Activated T-helper 2 cell treated with anti-CD3 and anti-CD28 coated beads, Interferon-gamma antibody, Interleukin-2, Interleukin-4, amounts not matched to agents 10 μg/mL and 5 μg/mL and 100 μg/mL, durations not matched to agents 14 hours and 24 hours and 36 hours (primary cell): ENCODE measurements at regions of chr2 and their contacts with region 1.

Region 1: DNA sequence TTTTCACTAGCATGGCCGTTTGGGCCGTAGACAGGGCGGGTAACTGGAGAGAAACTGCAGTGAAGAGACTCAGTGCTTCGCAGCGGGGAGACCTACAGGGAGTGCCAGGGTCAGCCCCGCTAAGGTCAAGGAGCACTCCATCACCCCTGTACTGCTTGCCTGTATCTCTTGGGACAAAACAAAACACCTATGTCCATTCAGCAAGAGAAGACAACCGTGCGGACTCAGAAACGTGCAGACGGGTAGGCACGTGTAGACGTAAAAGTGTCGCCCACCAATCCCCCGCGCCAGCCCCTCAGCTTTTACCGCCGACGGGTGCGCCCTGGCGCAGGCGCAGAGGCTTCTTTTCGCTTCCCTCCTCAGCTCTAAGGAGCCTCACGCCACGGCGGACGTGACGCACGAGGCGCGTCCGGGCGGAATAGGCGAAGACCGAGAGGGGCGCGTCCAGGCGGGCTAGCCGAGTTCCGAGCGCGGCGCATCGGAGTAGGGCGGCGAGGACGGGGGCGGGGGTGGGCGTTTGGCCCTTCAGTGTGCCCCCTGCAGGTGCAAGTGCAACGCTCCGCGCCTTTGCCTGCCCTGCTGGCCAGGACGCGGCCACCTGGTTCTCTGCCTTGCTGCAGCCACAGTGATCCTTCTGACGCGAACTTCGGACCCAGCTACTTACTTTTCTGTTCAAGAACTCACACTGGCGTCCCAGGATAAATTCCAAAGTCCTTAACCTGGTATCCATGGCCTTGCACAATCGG is 3.3 kb upstream of the SOS1 start:
- DNase-seq: peak; percentile 95
- H3K4me3 Mint-ChIP-seq: peak overlapping the region; percentile 97
- H3K27ac Mint-ChIP-seq: peak overlapping the region; percentile 96
- H3K4me1 Mint-ChIP-seq: peaks cover 49% of the 10 kb centered on the region
- H3K27me3 Mint-ChIP-seq: no peaks in the 10 kb centered on the region

Region 2: DNA sequence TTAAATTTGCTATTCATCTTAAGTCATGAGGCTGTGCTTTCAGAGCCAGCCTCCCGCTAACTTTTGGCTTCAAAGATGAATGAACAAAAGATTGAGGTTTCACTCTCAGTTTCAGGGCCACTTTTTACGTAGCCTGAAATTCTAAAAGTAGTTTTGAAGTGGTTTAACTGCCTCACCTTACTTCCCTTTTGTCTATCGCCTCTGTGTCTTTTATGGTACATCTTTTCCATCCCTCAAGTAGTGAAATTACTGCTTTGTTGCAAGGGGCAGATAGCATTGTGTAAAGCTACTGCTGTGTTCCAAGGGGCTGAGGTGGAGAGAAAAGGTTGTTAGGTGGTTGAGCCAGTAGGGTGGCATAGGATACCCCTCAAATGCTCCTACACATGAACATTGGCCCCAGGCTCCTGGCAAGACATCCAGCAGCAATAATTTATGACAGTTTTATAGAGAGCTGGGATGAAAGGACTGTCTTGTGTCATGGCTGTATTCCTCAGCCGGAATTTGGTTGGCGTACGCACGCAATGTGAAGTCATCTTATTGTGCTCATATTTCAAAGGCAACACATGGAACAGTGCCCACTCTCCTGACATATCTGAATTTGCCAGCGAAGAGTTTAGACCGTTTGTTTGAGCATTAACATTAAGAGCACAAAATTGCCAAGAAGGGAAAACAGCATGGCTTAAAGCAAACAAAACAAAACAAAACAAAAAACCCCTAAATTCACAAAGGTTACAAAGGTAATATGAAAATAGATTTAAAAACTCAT is 1747.6 kb before region 1 on chr2:
- intact Hi-C with region 1: loop called (anchors 10 kb)
- DNase-seq: peak; percentile 20
- H3K4me3 Mint-ChIP-seq: peak overlapping the region; percentile 24
- H3K27ac Mint-ChIP-seq: peak overlapping the region; percentile 73
- H3K4me1 Mint-ChIP-seq: peaks cover 29% of the 10 kb centered on the region
- H3K27me3 Mint-ChIP-seq: peaks cover 44% of the 10 kb centered on the region

Region 3: GRCh38 chr2:39059366-39059952 is 64.7 kb before region 1 on chr2:
- intact Hi-C with region 1: loop called (anchors 2 kb)
- DNase-seq: no peak
- H3K4me3 Mint-ChIP-seq: no peak overlapping the region
- H3K27ac Mint-ChIP-seq: peak overlapping the region; percentile 58
- H3K4me1 Mint-ChIP-seq: peaks cover 20% of the 10 kb centered on the region
- H3K27me3 Mint-ChIP-seq: no peaks in the 10 kb centered on the region

Region 4: GRCh38 chr2:39141331-39142271 is 17.4 kb after region 1 on chr2:
- intact Hi-C with region 1: loop called (anchors 1 kb)
- DNase-seq: no peak
- H3K4me3 Mint-ChIP-seq: peak overlapping the region; percentile 11
- H3K27ac Mint-ChIP-seq: peak overlapping the region; percentile 36
- H3K4me1 Mint-ChIP-seq: peaks cover 58% of the 10 kb centered on the region
- H3K27me3 Mint-ChIP-seq: no peaks in the 10 kb centered on the region

Region 5: DNA sequence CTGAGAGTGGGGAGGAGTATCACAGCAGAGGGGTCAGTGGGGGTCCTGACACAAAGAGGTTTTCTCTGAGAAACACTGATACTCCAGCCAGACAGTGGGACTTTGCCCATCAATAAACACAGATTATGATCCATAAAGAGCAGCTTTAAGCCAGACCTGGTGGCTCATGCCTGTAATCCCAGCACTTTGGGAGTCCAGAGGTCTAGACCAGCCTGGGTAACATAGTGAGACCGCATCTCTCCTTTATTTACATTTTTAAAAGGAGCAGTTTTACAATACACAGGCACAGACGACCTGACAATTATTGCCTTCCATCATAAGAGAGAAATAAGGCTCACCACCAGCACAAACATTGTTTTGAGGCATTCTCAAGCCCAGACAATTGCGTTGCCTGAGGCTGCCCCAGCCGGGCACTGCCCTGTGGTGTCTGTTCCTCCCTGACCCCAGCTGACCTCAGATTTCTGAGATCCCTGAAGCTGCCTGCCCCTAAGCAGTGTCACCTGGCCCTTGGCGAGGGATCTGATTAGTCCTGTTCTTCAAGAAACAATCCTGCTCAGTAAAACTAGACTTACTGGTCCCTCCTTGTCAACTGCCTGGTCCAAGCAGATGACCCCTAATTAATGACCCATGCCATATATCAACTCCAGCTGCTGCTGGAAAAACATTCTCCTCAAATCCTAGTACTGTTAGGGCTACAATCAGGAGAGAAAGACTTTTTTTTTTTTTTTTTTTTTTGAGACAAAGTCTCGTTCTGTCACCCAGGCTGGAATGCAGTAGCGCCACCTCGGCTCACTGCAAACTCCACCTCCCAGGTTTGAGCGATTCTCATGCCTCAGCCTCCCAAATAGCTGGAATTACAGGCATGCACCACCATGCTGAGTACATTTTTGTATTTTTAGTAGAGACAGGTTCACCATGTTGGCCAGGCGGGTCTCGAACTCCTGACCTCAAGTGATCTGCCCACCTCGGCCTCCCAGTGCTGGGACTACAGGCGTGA is 56.1 kb after region 1 on chr2:
- intact Hi-C with region 1: no loop called
- DNase-seq: no peak
- H3K4me3 Mint-ChIP-seq: no peak overlapping the region
- H3K27ac Mint-ChIP-seq: no peak overlapping the region
- H3K4me1 Mint-ChIP-seq: peaks cover 4% of the 10 kb centered on the region
- H3K27me3 Mint-ChIP-seq: peaks cover 2% of the 10 kb centered on the region

Region 6: DNA sequence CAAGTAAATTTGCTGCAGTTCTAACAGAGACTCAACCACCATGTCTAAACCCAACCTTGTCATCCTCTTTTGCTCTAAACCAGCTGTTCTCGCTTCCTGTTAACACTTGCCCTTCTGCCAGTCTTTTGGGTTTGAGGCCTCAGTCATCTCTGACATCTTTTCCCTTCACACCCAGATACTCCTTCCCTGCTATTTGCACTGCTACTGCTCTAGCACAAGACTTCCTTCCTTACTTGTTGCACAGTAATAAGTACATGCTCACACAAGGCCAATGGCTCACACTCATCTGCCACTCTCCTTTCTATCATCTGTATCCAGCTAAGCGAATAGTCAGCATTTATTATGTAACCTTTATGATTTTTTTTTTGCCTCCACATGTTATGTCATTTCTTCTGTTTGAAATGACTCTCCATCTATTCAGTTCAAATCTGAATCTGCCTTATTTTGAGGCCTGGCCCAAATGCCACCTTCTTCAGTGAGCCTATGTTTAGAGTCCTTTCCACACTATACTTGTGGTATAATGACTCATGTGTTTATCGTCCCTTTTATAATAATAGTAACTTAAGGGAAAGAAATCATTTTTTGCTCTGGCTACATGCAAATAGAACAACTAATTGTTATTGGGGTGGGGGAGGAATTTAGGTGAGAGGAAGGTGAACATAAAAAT is 142.1 kb after region 1 on chr2:
- intact Hi-C with region 1: no loop called
- DNase-seq: no peak
- H3K4me3 Mint-ChIP-seq: no peak overlapping the region
- H3K27ac Mint-ChIP-seq: peak overlapping the region; percentile 51
- H3K4me1 Mint-ChIP-seq: peaks cover 17% of the 10 kb centered on the region
- H3K27me3 Mint-ChIP-seq: no peaks in the 10 kb centered on the region

Region 7: DNA sequence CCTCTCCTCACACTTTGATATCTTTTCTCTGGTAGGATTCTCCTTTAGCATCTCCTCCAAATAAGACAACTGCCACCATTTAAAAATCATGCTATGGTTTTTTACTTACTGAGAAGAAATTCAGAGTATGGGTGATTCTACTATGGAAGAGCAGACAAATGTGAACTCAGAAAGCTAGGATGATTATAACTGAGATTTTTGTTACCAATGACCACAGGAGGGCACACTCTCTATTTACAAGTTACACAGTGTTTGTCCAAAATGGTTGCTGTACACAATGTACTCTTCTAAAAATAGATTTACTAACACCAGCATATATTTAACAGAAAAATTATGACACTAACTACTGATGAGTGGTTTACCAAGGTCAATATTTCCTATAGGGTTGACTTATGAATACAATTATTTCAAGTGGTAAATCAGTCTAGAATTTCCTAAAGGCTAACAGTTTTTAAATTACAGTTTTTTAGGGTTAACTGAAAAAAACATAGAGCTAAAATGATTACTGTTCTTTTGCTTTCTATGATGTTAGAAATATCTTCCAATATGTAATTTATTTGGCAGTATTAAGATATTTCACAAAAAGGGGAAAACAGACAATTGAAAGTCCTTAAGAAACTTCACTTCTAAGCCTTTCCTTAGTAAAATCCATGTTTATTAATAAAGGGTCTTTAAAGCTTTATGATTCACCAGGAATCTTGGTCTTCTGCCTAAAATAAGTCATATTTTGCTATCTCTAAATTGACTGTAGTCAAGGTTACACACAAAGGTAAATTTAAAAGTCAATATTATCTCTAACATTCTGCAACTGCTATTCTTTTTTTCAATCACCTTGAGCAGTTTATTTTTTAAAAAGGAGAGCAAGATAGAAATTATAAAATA is 255.7 kb after region 1 on chr2:
- intact Hi-C with region 1: loop called (anchors 5 kb)
- DNase-seq: no peak
- H3K4me3 Mint-ChIP-seq: no peak overlapping the region
- H3K27ac Mint-ChIP-seq: no peak overlapping the region
- H3K4me1 Mint-ChIP-seq: peaks cover 31% of the 10 kb centered on the region
- H3K27me3 Mint-ChIP-seq: no peaks in the 10 kb centered on the region

Region 8: DNA sequence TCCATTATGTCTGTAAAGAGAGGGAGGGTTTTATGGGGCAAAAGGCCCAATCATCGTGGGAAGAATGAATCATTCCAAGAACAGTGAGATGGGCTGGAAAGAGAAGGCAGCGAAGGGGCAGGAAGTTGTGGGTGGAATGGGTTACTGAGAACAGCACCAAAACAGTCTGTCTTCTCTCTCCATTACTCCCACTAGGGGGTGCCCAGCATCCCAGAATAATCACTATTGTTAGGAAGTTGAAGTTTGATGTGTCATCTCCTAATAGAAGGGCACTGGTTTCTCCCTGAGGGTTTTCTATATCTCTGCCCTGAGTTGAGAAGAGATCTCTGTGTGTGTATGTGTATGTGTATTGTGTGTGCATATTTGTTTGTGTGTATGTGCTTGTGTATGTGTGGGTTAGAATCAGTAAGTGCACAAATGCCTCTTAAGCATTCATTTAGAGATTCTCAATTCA is 389.5 kb after region 1 on chr2:
- intact Hi-C with region 1: loop called (anchors 5 kb)
- DNase-seq: peak; percentile 30
- H3K4me3 Mint-ChIP-seq: no peak overlapping the region
- H3K27ac Mint-ChIP-seq: peak overlapping the region; percentile 54
- H3K4me1 Mint-ChIP-seq: peaks cover 50% of the 10 kb centered on the region
- H3K27me3 Mint-ChIP-seq: peaks cover 2% of the 10 kb centered on the region